AG04450 (cell line): ENCODE measurements at regions of chr6 and their contacts with region 1.

Region 1: GRCh38 chr6:85354761-85355618 is 94.9 kb upstream of the NT5E start:
- DNase-seq: peak; percentile 51
- H3K4me3 ChIP-seq: no peak overlapping the region
- H3K27ac ChIP-seq: no peak overlapping the region
- H3K27me3 ChIP-seq: no peaks in the 10 kb centered on the region
- CTCF ChIP-seq: peak; percentile 91

Region 2: DNA sequence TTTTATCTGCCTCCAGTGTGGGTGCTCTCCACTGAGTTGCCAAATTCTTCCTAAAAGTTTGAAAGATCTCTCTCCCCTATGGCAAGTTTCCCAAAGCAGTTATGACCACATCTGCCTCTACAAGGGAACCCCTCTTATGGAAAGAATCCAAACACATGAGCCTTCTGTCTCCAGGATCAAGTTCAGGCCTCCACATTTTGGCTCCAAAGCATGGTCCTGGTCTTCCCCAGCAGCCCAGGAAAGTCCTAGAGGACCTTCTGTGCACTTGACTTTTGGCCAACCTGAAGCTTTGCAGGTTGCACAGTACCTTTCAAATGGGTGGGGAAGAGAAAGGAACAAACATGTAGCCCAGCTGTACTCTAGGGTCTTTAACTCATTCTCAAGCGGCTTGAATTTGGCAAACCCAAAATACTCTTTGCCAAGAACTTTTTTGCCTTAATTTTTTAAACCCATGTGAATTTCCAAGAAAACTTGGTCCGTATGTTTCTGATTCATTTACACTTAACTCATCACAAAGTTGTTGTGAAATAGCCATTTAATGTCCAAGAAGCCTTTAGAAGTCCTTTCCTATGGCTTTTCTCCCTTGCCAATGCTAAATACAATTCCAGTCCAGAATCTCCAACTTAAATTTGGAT is 350.5 kb before region 1 on chr6:
- CTCF ChIA-PET with region 1: no interaction called
- POLR2A ChIA-PET with region 1: no interaction called
- DNase-seq: no peak
- H3K4me3 ChIP-seq: no peak overlapping the region
- H3K27ac ChIP-seq: no peak overlapping the region
- H3K27me3 ChIP-seq: no peaks in the 10 kb centered on the region
- CTCF ChIP-seq: no peak

Region 3: GRCh38 chr6:85449818-85450759 is 95.1 kb after region 1 on chr6 and contains the start of gene NT5E:
- CTCF ChIA-PET with region 1: interaction called, 43 read pairs
- POLR2A ChIA-PET with region 1: interaction called, 9 read pairs
- DNase-seq: no peak
- H3K4me3 ChIP-seq: peak within 1 kb of the TSS; percentile 87
- H3K27ac ChIP-seq: peak within 1 kb of the TSS; percentile 76
- H3K27me3 ChIP-seq: no peaks in the 10 kb centered on the region
- CTCF ChIP-seq: no peak
- polyA plus RNA-seq, gene NT5E: 127 and 164 TPM in 2 replicates

Region 4: DNA sequence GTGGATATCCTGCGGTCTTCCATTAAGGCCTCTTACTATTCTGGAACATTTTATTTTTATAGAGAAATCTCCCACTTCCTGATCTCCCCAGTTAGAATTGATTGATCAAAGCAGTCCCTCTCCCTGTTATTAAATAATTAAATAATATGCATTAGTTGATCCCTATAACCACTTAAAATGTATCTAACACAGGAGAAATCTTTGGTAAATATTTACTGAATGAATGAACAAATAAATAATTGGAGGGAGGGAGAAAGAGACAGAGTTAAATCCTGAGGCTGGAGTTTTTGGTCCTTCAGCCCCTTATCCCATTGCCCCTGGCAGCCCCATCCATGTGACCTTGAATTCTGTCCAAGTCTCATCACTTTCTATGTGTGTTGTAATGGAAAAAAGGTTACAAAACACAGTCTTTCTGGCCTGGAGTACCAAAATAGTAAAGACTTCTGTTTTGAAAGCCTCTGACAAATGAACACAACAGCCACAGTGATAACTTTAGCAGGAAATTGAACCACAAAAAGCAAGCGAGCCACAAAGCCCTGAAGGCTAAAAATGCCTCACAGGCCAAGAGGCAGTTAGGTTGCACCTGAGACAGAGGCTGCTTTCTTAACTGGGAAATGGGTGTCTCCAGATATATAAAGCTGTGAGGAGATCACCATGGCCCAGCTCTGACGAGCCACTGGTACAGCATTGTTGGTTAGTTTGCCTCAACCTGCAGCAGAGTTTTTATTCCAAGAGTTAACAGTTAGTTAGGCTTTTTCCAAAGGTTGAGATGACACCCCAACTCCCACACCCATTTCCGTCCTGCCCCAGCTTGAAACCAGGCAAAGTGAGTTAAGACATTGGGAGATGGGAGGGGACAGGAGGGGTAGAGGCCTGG is 106.2 kb after region 1 on chr6:
- CTCF ChIA-PET with region 1: interaction called, 42 read pairs
- POLR2A ChIA-PET with region 1: no interaction called
- DNase-seq: no peak
- H3K4me3 ChIP-seq: no peak overlapping the region
- H3K27ac ChIP-seq: no peak overlapping the region
- H3K27me3 ChIP-seq: no peaks in the 10 kb centered on the region
- CTCF ChIP-seq: no peak

Region 5: DNA sequence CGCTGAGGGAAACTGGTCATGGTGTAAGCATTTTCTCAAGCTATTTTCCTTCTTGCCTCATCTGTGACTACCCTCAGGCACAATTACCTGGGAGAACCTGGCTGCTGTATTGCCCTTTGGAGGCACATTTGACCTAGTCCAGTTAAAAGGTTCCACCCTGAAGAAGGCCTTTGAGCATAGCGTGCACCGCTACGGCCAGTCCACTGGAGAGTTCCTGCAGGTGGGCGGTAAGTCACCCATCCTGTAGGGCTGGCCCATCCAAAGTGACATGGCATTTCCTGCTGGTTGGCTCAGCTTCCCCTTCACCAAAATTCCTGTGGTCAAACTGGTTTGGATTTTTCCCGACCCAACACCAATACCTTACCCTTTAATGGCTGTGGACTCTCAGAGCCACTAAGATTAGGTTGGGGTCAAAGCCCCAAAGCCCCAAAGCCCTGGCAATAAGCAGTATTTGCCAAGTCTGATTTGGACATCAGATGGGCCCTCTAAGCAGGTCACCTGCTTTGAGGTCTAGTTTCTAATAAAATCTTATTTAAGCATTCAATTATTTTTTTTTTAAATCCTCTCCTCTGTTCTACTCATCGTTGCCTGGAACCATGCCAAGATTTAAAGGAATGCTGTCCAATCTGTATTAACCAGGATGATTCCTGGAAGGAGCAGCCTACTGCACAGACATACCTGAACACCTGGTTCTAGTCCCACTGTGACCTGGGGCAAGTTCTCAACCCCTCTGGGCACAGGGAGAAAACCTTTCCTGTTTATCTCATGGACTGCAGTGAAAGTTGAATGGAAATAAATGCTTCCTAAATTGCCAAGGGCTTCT is 135.7 kb after region 1 on chr6:
- CTCF ChIA-PET with region 1: interaction called, 412 read pairs
- POLR2A ChIA-PET with region 1: no interaction called
- DNase-seq: no peak
- H3K4me3 ChIP-seq: no peak overlapping the region
- H3K27ac ChIP-seq: no peak overlapping the region
- H3K27me3 ChIP-seq: no peaks in the 10 kb centered on the region
- CTCF ChIP-seq: no peak

Region 6: GRCh38 chr6:85506441-85507093 is 151.6 kb after region 1 on chr6:
- CTCF ChIA-PET with region 1: interaction called, 11 read pairs
- POLR2A ChIA-PET with region 1: no interaction called
- DNase-seq: no peak
- H3K4me3 ChIP-seq: no peak overlapping the region
- H3K27ac ChIP-seq: no peak overlapping the region
- H3K27me3 ChIP-seq: no peaks in the 10 kb centered on the region
- CTCF ChIP-seq: no peak